CD8-positive, alpha-beta T cell (primary cell): ENCODE measurements at regions of chr11 and their contacts with region 1.

Region 1: GRCh38 chr11:4072668-4073285 is 21.8 kb upstream of the RRM1 start:
- DNase-seq: peak in 7 of 9 experiments; percentile 29 to 87 (median 46)
- ATAC-seq: peak; percentile 83
- H3K4me3 ChIP-seq: no peak overlapping the region
- H3K4me3 Mint-ChIP-seq: no peak overlapping the region
- H3K27ac ChIP-seq: peak overlapping the region in 1 of 2 experiments; percentile 49
- H3K27ac Mint-ChIP-seq: peak overlapping the region; percentile 87
- H3K4me1 ChIP-seq: peaks cover 37% of the 10 kb centered on the region
- H3K4me1 Mint-ChIP-seq: peaks cover 53% of the 10 kb centered on the region
- H3K27me3 ChIP-seq: no peaks in the 10 kb centered on the region
- H3K27me3 Mint-ChIP-seq: no peaks in the 10 kb centered on the region
- CTCF ChIP-seq: peak; percentile 87

Region 2: DNA sequence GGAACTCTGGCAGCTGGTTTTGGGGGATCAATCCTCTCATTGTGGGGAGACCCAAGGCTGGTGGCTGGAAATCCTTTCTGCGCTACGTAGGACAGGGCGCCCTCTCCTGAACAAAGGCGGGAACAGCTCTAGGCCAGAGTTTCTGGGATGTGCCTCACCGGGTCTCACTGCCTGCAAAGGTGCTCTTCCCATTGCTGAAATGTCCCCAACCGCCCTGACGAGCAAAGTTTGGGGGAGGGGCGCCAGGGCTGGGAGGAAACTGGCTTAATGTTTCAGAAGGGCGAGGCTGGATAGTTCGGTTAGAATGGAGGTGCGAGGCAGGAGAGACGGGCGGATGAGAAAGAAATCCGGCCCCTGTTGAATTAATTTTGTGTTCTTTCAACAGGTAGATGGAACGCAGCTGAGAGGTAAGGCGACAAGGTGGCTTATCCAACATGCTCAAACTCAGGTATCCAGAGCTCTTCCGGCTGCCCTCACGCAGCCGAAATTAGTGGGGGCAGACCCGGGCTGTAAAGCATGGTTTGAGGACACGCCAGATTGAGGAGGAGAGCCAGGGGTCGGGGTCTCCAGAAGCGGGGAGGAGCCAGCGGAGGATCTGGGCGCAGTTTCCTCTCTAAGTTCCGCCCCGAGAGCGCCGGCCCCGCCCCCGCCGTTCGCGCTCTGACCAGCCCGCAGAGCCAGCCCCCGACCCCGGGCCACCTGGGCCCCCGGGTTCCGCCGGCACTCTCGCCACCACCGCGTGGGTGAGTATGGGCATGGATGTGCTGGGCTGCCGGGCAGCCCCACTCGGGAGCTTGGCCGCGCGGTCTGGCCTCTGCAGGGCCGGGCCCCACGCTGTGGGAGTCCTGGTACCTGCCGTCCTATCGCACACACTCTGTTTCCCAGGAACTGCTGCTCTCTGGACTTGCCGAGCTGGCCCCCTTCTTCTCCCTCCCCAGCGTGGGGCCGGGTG is 264.6 kb before region 1 on chr11 and contains the start of gene PGAP2:
- CTCF ChIA-PET with region 1: interaction called, 36 read pairs
- POLR2A ChIA-PET with region 1: interaction called, 9 read pairs
- intact Hi-C with region 1: no loop called
- DNase-seq: peak; percentile 28 to 76 (median 60)
- ATAC-seq: peak; percentile 71
- H3K4me3 ChIP-seq: peak within 1 kb of the TSS; percentile 71 to 98
- H3K4me3 Mint-ChIP-seq: peak within 1 kb of the TSS; percentile 97
- H3K27ac ChIP-seq: peak within 1 kb of the TSS; percentile 49 to 62
- H3K27ac Mint-ChIP-seq: peak within 1 kb of the TSS; percentile 91
- H3K4me1 ChIP-seq: peaks cover 5% of the 10 kb centered on the region
- H3K4me1 Mint-ChIP-seq: peaks cover 15% of the 10 kb centered on the region
- H3K27me3 ChIP-seq: no peaks in the 10 kb centered on the region
- H3K27me3 Mint-ChIP-seq: no peaks in the 10 kb centered on the region
- CTCF ChIP-seq: peak; percentile 59
- total RNA-seq, gene PGAP2: 16.3 to 18.5 TPM

Region 3: GRCh38 chr11:3841426-3842350 is 231.1 kb before region 1 on chr11:
- CTCF ChIA-PET with region 1: interaction called, 548 read pairs
- POLR2A ChIA-PET with region 1: interaction called, 20 read pairs
- intact Hi-C with region 1: no loop called
- DNase-seq: peak; percentile 80 to 98 (median 94)
- ATAC-seq: peak; percentile 27
- H3K4me3 ChIP-seq: peak overlapping the region; percentile 70 to 95
- H3K4me3 Mint-ChIP-seq: peak overlapping the region; percentile 85
- H3K27ac ChIP-seq: peak overlapping the region; percentile 92 to 95
- H3K27ac Mint-ChIP-seq: peak overlapping the region; percentile 97
- H3K4me1 ChIP-seq: peaks cover 34% of the 10 kb centered on the region
- H3K4me1 Mint-ChIP-seq: peaks cover 46% of the 10 kb centered on the region
- H3K27me3 ChIP-seq: no peaks in the 10 kb centered on the region
- H3K27me3 Mint-ChIP-seq: no peaks in the 10 kb centered on the region
- CTCF ChIP-seq: peak; percentile 66

Region 4: GRCh38 chr11:3927133-3927796 is 145.5 kb before region 1 on chr11:
- CTCF ChIA-PET with region 1: interaction called, 28 read pairs
- POLR2A ChIA-PET with region 1: no interaction called
- intact Hi-C with region 1: loop called in 1 of 2 experiments (anchors 1 kb)
- DNase-seq: no peak
- ATAC-seq: no peak
- H3K4me3 ChIP-seq: no peak overlapping the region
- H3K4me3 Mint-ChIP-seq: no peak overlapping the region
- H3K27ac ChIP-seq: no peak overlapping the region
- H3K27ac Mint-ChIP-seq: peak overlapping the region; percentile 1
- H3K4me1 ChIP-seq: peaks cover 19% of the 10 kb centered on the region
- H3K4me1 Mint-ChIP-seq: peaks cover 60% of the 10 kb centered on the region
- H3K27me3 ChIP-seq: no peaks in the 10 kb centered on the region
- H3K27me3 Mint-ChIP-seq: no peaks in the 10 kb centered on the region
- CTCF ChIP-seq: no peak

Region 5: DNA sequence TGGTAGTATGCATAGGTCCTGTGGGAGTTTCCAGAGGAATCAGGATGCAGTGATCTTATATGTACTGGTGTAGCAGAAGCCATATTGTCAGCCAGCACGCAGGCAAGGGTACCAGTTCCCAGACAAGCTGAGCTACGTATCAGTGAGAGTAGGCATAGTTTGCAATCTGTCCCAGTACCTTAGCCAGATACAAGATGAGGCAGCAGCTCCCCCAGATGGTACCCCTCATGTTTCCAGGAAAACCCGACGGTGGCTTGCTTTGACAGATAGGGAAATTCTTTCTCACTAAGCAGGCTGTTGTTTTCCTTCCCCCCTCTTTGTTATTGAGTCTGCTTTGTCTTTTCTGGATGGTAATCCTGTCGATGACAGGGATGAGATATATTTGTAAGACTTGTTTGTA is 87.9 kb before region 1 on chr11:
- CTCF ChIA-PET with region 1: interaction called, 4 read pairs
- POLR2A ChIA-PET with region 1: no interaction called
- intact Hi-C with region 1: loop called (anchors 5 kb)
- DNase-seq: peak in 7 of 9 experiments; percentile 12 to 72 (median 54)
- ATAC-seq: peak; percentile 77
- H3K4me3 ChIP-seq: no peak overlapping the region
- H3K4me3 Mint-ChIP-seq: no peak overlapping the region
- H3K27ac ChIP-seq: no peak overlapping the region
- H3K27ac Mint-ChIP-seq: peak overlapping the region; percentile 92
- H3K4me1 ChIP-seq: peaks cover 78% of the 10 kb centered on the region
- H3K4me1 Mint-ChIP-seq: peaks cover 91% of the 10 kb centered on the region
- H3K27me3 ChIP-seq: no peaks in the 10 kb centered on the region
- H3K27me3 Mint-ChIP-seq: no peaks in the 10 kb centered on the region
- CTCF ChIP-seq: peak; percentile 21

Region 6: DNA sequence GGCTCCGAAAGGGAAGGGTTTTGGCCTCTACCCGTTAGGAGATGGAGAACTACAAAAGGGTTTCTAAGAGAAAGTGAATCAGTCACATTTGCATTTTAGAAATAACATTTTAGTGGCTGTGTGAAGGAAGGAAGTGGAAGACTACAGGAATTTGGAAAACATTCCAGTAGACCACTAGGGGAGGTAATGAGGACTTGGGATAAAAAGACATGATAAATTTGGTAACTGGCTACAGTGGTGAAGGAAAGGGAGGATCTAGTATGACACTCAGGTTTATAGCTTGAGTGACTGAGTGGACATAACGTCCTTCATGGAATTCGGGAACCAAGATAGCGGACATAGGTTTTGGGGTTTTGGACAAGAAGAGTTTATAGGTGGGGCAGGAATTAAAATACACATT is 14.8 kb after region 1 on chr11:
- CTCF ChIA-PET with region 1: interaction called, 40 read pairs
- POLR2A ChIA-PET with region 1: no interaction called
- intact Hi-C with region 1: no loop called
- DNase-seq: no peak
- ATAC-seq: no peak
- H3K4me3 ChIP-seq: no peak overlapping the region
- H3K4me3 Mint-ChIP-seq: no peak overlapping the region
- H3K27ac ChIP-seq: no peak overlapping the region
- H3K27ac Mint-ChIP-seq: peak overlapping the region; percentile 98
- H3K4me1 ChIP-seq: peaks cover 35% of the 10 kb centered on the region
- H3K4me1 Mint-ChIP-seq: peaks cover 40% of the 10 kb centered on the region
- H3K27me3 ChIP-seq: no peaks in the 10 kb centered on the region
- H3K27me3 Mint-ChIP-seq: no peaks in the 10 kb centered on the region
- CTCF ChIP-seq: no peak

Region 7: GRCh38 chr11:4727171-4727570 is 654.4 kb after region 1 on chr11:
- CTCF ChIA-PET with region 1: no interaction called
- POLR2A ChIA-PET with region 1: no interaction called
- intact Hi-C with region 1: no loop called
- DNase-seq: no peak
- ATAC-seq: no peak
- H3K4me3 ChIP-seq: no peak overlapping the region
- H3K4me3 Mint-ChIP-seq: no peak overlapping the region
- H3K27ac ChIP-seq: no peak overlapping the region
- H3K27ac Mint-ChIP-seq: no peak overlapping the region
- H3K4me1 ChIP-seq: no peaks in the 10 kb centered on the region
- H3K4me1 Mint-ChIP-seq: no peaks in the 10 kb centered on the region
- H3K27me3 ChIP-seq: no peaks in the 10 kb centered on the region
- H3K27me3 Mint-ChIP-seq: peaks cover 10% of the 10 kb centered on the region
- CTCF ChIP-seq: no peak